Heart right ventricle (tissue), 16 donors: ENCODE measurements at regions of chr15 and their contacts with region 1.

Region 1: DNA sequence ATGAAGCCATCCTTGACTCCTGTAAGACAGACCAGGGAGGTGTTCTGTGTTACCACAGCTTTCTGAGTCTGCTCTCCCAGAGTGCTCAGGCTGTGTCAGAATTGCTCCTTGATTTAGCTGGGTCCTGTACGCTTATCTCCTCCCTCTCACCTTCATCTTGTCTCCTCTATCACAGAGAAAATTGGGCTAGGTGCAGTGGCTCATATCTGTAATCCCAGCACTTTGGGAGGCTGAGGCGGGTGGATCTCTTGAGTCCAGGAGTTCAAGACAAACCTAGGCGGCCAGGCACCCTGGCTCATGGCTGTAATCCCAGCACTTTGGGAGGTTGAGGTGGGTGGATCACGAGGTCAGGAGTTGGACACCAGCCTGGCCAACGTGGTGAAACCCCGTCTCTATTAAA is 5.9 kb downstream of the SCAMP5 start:
- DNase-seq: no peak
- ATAC-seq: no peak
- H3K4me3 ChIP-seq: no peak overlapping the region
- H3K27ac ChIP-seq: no peak overlapping the region
- H3K4me1 ChIP-seq: peaks cover 0 to 10% (median 3%) of the 10 kb centered on the region in 9 donors
- H3K27me3 ChIP-seq: peaks cover 0 to 24% (median 3%) of the 10 kb centered on the region in 7 donors
- CTCF ChIP-seq: no peak

Region 2: GRCh38 chr15:73941044-73941443 is 1060.3 kb before region 1 on chr15:
- intact Hi-C with region 1: loop called in 1 of 10 experiments (anchors 5 kb)
- DNase-seq: no peak
- ATAC-seq: peak in 6 of 8 donors; percentile 7 to 66 (median 33)
- H3K4me3 ChIP-seq: no peak overlapping the region
- H3K27ac ChIP-seq: peak overlapping the region in 8 of 10 donors; percentile 7 to 86 (median 42)
- H3K4me1 ChIP-seq: peaks cover 12 to 67% (median 31%) of the 10 kb centered on the region in 9 donors
- H3K27me3 ChIP-seq: no peaks in the 10 kb centered on the region
- CTCF ChIP-seq: no peak

Region 3: DNA sequence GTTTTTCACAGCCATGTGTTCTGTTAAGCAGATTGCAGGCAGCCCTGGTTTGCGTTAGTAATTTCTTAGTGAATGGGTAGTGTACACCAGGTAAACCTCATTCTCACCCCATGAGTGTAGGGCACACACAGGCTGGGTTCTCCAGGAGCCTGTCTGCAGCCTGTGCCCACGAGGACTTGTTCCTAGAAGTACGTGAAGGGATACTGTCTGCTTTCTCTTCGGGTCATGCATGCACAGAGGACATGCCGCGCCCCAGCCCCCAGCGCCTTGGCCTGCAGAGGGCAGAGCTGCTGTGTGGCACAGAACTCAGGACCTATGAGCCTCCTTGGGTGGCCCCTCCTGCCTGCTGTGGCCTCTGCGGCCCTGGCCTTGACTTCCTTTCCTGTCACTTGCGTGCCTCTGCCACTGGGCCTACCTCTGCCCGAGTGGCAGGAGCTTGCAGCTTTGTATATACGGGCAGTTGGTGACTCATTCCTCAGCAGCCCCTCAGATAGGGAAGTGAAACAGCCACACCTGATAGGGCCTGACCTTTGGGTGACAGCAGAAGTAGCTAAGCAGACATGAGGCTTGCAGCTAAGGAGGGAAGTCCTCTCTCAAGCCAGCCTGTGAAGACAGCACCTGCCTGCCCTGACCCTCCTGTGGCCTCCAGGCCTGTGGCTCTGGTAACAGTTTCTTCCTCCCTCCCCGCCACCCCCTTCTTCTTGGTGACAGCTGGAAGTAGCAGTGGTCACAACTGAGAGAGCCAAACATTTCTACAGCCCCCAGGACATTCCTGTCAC is 41.6 kb after region 1 on chr15:
- intact Hi-C with region 1: no loop called
- DNase-seq: peak; percentile 83
- ATAC-seq: peak; percentile 44 to 79 (median 68)
- H3K4me3 ChIP-seq: peak overlapping the region in 2 of 10 donors; percentile 28 to 32
- H3K27ac ChIP-seq: peak overlapping the region; percentile 82 to 98 (median 92)
- H3K4me1 ChIP-seq: peaks cover 43 to 92% (median 65%) of the 10 kb centered on the region in 9 donors
- H3K27me3 ChIP-seq: no peaks in the 10 kb centered on the region
- CTCF ChIP-seq: peak; percentile 36 to 79 (median 65)

Region 4: GRCh38 chr15:75138016-75138999 is 137.0 kb after region 1 on chr15:
- intact Hi-C with region 1: no loop called
- DNase-seq: no peak
- ATAC-seq: peak in 2 of 8 donors; percentile 21 to 39
- H3K4me3 ChIP-seq: no peak overlapping the region
- H3K27ac ChIP-seq: peak overlapping the region in 2 of 10 donors; percentile 4 to 23
- H3K4me1 ChIP-seq: peaks cover 0 to 11% (median 5%) of the 10 kb centered on the region in 9 donors
- H3K27me3 ChIP-seq: no peaks in the 10 kb centered on the region
- CTCF ChIP-seq: no peak